ENCODE measurements at regions of chr10 and their contacts with region 1.

Region 1: GRCh38 chr10:70348228-70348850 is 34.1 kb downstream of the LRRC20 start:
- DNase-seq: peak; percentile 63
- ATAC-seq: peak; percentile 87
- H3K4me3 Mint-ChIP-seq: no peak overlapping the region
- H3K27ac Mint-ChIP-seq: no peak overlapping the region
- H3K4me1 Mint-ChIP-seq: no peaks in the 10 kb centered on the region
- H3K27me3 Mint-ChIP-seq: no peaks in the 10 kb centered on the region
- CTCF ChIP-seq: peak; percentile 58

Region 2: DNA sequence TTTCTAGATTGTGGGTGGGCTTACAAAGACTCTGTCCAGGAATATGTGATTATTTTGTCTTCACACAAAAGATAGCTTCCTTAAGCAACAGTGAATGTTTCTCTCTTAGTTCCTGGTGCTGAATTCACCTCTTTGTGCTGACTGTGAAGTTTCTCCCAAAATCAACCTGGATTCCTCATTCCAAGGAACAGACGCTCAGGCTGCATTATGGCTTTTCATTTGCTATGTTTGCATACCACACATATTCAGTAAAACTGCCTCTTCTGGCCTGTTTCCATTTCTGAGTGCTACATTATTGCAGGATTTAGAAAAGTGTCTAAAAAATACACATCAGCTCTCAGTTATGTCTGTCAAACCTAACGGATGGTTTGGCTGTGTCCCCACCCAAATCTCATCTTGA is 274.2 kb before region 1 on chr10:
- CTCF ChIA-PET with region 1: no interaction called
- POLR2A ChIA-PET with region 1: no interaction called
- intact Hi-C with region 1: no loop called
- DNase-seq: no peak
- ATAC-seq: no peak
- H3K4me3 Mint-ChIP-seq: no peak overlapping the region
- H3K27ac Mint-ChIP-seq: no peak overlapping the region
- H3K4me1 Mint-ChIP-seq: no peaks in the 10 kb centered on the region
- H3K27me3 Mint-ChIP-seq: no peaks in the 10 kb centered on the region
- CTCF ChIP-seq: no peak

Region 3: GRCh38 chr10:70267161-70267933 is 81.0 kb before region 1 on chr10:
- CTCF ChIA-PET with region 1: interaction called, 15 read pairs
- POLR2A ChIA-PET with region 1: no interaction called
- intact Hi-C with region 1: no loop called
- DNase-seq: peak; percentile 35
- ATAC-seq: peak; percentile 28
- H3K4me3 Mint-ChIP-seq: no peak overlapping the region
- H3K27ac Mint-ChIP-seq: peak overlapping the region; percentile 10
- H3K4me1 Mint-ChIP-seq: peaks cover 10% of the 10 kb centered on the region
- H3K27me3 Mint-ChIP-seq: peaks cover 2% of the 10 kb centered on the region
- CTCF ChIP-seq: peak; percentile 46